Left cardiac atrium (tissue), 4 donors: ENCODE measurements at regions of chr7 and their contacts with region 1.

Region 1: GRCh38 chr7:91089382-91089963 is 174.8 kb upstream of the FZD1 start:
- DNase-seq: no peak
- ATAC-seq: peak; percentile 39 to 41

Region 2: GRCh38 chr7:91784463-91784862 is 695.0 kb after region 1 on chr7:
- intact Hi-C with region 1: loop called (anchors 10 kb)
- DNase-seq: no peak
- ATAC-seq: peak in 1 of 2 donors; percentile 30